ENCODE measurements at regions of chr20 and their contacts with region 1.

Region 1: GRCh38 chr20:63537525-63538203 is 488 bp upstream of the PTK6 start:
- DNase-seq: peak; percentile 98
- ATAC-seq: peak; percentile 85
- H3K4me3 ChIP-seq: peak overlapping the region; percentile 84
- H3K27ac ChIP-seq: peak overlapping the region; percentile 85
- H3K4me1 ChIP-seq: peaks cover 33% of the 10 kb centered on the region
- H3K27me3 ChIP-seq: no peaks in the 10 kb centered on the region
- CTCF ChIP-seq: peak; percentile 84

Region 2: DNA sequence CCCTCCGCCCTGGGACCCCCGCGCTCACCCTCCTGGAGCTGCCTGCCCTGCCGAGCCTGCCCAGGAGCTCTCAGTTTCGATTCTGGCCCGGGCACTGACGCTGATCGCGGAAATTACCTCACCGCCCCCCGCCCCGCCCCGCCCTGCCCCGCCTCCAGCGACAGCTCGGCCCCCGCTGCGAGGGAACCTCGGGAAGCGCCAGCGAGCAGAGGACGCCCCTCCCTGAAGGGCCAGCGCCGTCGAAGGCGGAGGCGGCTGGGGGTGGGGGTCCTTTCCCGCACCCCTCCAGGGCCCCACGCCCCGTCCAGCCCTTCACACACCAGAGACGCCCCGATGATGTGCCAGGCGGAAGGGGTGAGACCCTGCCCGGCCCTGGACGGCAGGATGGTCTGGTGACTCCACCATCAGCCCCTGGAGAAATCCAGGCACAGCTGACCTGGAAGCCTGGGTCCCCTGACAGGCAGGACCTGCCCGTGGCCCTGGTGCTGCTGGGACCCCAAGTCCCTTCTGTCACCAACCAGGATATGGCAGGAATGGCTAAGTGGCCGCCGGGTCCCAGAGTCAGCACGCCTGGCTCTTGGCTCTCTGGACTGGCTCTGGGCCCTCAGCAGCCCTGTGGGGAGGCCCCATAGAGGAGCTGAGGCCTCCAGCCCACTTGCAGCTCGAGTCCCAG is 36.6 kb after region 1 on chr20 and contains the start of gene HELZ2:
- CTCF ChIA-PET with region 1: interaction called, 6 read pairs
- POLR2A ChIA-PET with region 1: interaction called, 21 read pairs
- intact Hi-C with region 1: loop called (anchors 2 kb)
- DNase-seq: peak; percentile 58
- ATAC-seq: peak; percentile 85
- H3K4me3 ChIP-seq: peak within 1 kb of the TSS; percentile 77
- H3K27ac ChIP-seq: no peak within 1 kb of the TSS
- H3K4me1 ChIP-seq: peaks cover 18% of the 10 kb centered on the region
- H3K27me3 ChIP-seq: no peaks in the 10 kb centered on the region
- CTCF ChIP-seq: no peak
- total RNA-seq, gene HELZ2: 33.4 and 77.2 TPM in 2 replicates

Region 3: DNA sequence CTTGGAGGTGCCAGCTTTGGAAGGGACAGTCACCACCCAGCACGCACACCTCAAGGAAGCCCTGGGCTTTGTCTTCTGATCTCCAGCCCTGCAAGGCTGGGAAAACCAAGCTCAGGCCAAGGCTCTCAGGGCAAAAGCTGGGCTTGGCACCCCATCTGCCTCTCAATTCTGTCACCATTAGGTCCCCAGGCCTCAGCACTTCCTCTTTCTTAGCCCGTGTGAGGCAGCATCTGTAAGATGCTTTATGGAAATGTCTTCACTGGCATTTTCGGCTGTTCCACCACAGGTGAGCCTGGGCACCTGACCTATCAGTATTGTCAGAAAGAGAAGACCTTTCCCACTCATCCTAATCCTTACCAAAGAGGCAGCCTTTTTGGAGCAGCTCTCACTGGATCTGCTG is 64.7 kb after region 1 on chr20:
- CTCF ChIA-PET with region 1: no interaction called
- POLR2A ChIA-PET with region 1: no interaction called
- intact Hi-C with region 1: no loop called
- DNase-seq: no peak
- ATAC-seq: no peak
- H3K4me3 ChIP-seq: no peak overlapping the region
- H3K27ac ChIP-seq: no peak overlapping the region
- H3K4me1 ChIP-seq: no peaks in the 10 kb centered on the region; the same call in 1 of the 2 replicates
- H3K27me3 ChIP-seq: no peaks in the 10 kb centered on the region
- CTCF ChIP-seq: no peak

Region 4: GRCh38 chr20:63635431-63636141 is 97.9 kb after region 1 on chr20:
- CTCF ChIA-PET with region 1: interaction called, 5 read pairs
- POLR2A ChIA-PET with region 1: interaction called, 14 read pairs
- intact Hi-C with region 1: loop called (anchors 5 kb)
- DNase-seq: no peak
- ATAC-seq: no peak
- H3K4me3 ChIP-seq: no peak overlapping the region
- H3K27ac ChIP-seq: no peak overlapping the region
- H3K4me1 ChIP-seq: no peaks in the 10 kb centered on the region
- H3K27me3 ChIP-seq: no peaks in the 10 kb centered on the region
- CTCF ChIP-seq: no peak

Region 5: GRCh38 chr20:63673951-63674350 is 136.3 kb after region 1 on chr20:
- CTCF ChIA-PET with region 1: no interaction called
- POLR2A ChIA-PET with region 1: no interaction called
- intact Hi-C with region 1: no loop called
- DNase-seq: no peak
- ATAC-seq: no peak
- H3K4me3 ChIP-seq: no peak overlapping the region
- H3K27ac ChIP-seq: no peak overlapping the region
- H3K4me1 ChIP-seq: no peaks in the 10 kb centered on the region
- H3K27me3 ChIP-seq: no peaks in the 10 kb centered on the region
- CTCF ChIP-seq: no peak

Region 6: GRCh38 chr20:63782051-63782471 is 244.4 kb after region 1 on chr20:
- CTCF ChIA-PET with region 1: no interaction called
- POLR2A ChIA-PET with region 1: no interaction called
- intact Hi-C with region 1: loop called (anchors 5 kb)
- DNase-seq: peak; percentile 59
- ATAC-seq: peak; percentile 70
- H3K4me3 ChIP-seq: no peak overlapping the region
- H3K27ac ChIP-seq: no peak overlapping the region
- H3K4me1 ChIP-seq: peaks cover 13% of the 10 kb centered on the region
- H3K27me3 ChIP-seq: no peaks in the 10 kb centered on the region
- CTCF ChIP-seq: peak; percentile 49; the same call in 1 of the 2 replicates

Region 7: DNA sequence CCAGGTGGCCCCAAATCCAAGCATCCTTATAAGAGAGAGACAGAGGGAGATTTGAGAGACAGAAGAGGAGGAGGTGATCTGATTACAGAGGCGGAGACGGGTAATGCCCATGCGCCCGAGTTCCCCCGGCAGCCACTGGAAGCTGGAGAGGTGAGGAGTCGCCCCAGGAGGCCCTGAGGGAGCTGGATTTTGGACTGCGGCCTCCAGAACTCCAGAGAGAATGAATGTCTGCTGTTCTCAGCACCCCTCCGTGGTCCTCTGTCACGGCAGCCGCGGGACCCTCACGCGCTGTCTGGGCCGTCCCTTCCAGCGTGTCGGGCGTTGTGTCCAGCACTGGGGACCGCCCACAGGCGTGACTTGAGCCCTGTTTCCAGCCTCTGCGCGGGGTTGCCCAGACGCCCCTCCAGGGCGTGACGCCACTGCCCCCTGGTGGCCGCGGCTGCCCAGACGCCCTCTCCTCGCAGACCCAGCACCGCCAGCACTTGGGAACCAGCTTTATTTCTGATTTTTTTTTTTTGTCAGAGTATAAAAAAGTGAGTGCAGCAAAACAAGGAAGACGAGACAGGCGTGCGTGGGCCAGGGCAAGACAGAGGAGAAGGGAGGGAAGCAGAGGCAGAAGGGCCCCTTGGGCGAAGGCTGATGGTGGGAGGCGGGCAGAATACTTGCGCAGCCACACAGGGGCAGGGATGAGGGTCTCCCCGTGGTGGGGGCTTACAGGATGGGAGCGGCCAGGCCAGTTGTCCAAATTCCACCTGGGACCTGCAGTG is 436.2 kb after region 1 on chr20:
- CTCF ChIA-PET with region 1: interaction called, 11 read pairs
- POLR2A ChIA-PET with region 1: no interaction called
- intact Hi-C with region 1: no loop called
- DNase-seq: peak; percentile 84
- ATAC-seq: peak; percentile 67
- H3K4me3 ChIP-seq: peak overlapping the region; percentile 30; the same call in 1 of the 2 replicates
- H3K27ac ChIP-seq: no peak overlapping the region
- H3K4me1 ChIP-seq: peaks cover 17% of the 10 kb centered on the region
- H3K27me3 ChIP-seq: no peaks in the 10 kb centered on the region
- CTCF ChIP-seq: peak; percentile 97

Measured in PC-3 (cell line).